Posterior vena cava (tissue), 2 donors: ENCODE measurements at regions of chr5 and their contacts with region 1.

Region 1: DNA sequence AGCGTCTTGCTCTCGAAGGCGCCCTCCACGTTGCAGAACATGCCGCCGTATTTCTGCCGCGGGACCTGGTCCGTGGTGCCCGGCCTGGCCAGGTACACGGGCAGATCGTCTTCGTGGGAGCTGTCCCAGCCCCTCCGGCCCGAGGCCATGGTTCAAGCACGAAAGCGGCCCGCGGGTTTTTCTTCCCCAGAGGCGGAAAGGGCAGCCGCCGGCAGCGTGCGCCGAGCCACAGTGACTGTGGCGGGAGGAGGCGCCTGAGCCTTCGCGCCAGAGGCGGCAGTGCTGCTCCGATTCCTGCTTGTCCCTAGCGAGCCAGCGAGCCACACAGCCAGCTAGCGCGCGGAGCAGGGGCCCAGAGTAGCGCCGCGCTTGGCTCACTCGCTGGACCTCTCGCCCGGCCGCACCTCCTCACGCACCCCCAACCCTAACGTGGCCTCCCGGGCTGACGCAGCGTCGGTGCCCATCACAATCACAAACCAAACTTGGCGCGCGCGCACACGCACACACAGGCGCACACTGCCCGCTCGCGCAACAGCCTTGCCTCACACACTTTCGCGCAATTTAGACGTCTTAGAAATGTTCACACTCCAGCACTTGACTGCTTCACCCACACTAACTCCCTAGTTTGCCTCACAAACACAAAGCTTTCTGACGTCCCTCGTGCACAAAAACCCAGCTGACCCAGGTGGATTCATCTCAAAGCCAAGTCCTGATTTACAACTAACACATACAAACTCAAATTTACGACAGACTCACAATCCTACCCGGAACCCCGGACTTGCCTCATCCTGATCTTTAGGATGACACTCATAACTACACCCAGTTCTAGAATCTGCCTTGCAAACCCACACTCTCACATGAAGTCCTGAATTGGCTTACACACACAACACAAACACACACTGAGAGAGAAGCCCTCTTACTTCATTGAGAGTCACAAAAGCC is at the start of gene DPYSL3:
- DNase-seq: peak; percentile 95
- total RNA-seq, gene DPYSL3: 401 to 418 TPM

Region 2: GRCh38 chr5:147417135-147417813 is 92.7 kb before region 1 on chr5:
- intact Hi-C with region 1: loop called in 1 of 2 experiments (anchors 10 kb)
- DNase-seq: peak; percentile 86